ENCODE measurements at regions of chrX and their contacts with region 1.

Region 1: GRCh38 chrX:53317365-53318069 is 36.1 kb upstream of the IQSEC2 start:
- DNase-seq: peak; percentile 47 to 83 (median 65)
- ATAC-seq: peak; percentile 78
- H3K4me3 ChIP-seq: no peak overlapping the region
- H3K27ac ChIP-seq: no peak overlapping the region
- H3K4me1 ChIP-seq: peaks cover 0 to 20% of the 10 kb centered on the region in 2 donors
- H3K27me3 ChIP-seq: peaks cover 38 to 43% of the 10 kb centered on the region in 2 donors
- CTCF ChIP-seq: peak; percentile 77 to 83

Region 2: GRCh38 chrX:53071604-53072417 is 245.7 kb before region 1 on chrX:
- intact Hi-C with region 1: no loop called
- DNase-seq: peak in 2 of 4 donors; percentile 73 to 77
- ATAC-seq: peak; percentile 95
- H3K4me3 ChIP-seq: peak overlapping the region; percentile 17 to 31
- H3K27ac ChIP-seq: no peak overlapping the region
- H3K4me1 ChIP-seq: no peaks in the 10 kb centered on the region
- H3K27me3 ChIP-seq: peaks cover 0 to 4% of the 10 kb centered on the region in 2 donors
- CTCF ChIP-seq: peak; percentile 55 to 61

Region 3: GRCh38 chrX:53433651-53434639 is 116.4 kb after region 1 on chrX and contains the start of gene HSD17B10:
- intact Hi-C with region 1: loop called in 1 of 2 experiments (anchors 10 kb)
- DNase-seq: peak; percentile 66 to 96 (median 88)
- ATAC-seq: peak; percentile 98
- H3K4me3 ChIP-seq: peak within 1 kb of the TSS; percentile 45 to 56
- H3K27ac ChIP-seq: peak within 1 kb of the TSS; percentile 13 to 73
- H3K4me1 ChIP-seq: peaks cover 0 to 13% of the 10 kb centered on the region in 2 donors
- H3K27me3 ChIP-seq: peaks cover 0 to 17% of the 10 kb centered on the region in 2 donors
- CTCF ChIP-seq: no peak
- polyA plus RNA-seq, gene HSD17B10: 66.7 to 85.3 (median 77.4) TPM

Region 4: DNA sequence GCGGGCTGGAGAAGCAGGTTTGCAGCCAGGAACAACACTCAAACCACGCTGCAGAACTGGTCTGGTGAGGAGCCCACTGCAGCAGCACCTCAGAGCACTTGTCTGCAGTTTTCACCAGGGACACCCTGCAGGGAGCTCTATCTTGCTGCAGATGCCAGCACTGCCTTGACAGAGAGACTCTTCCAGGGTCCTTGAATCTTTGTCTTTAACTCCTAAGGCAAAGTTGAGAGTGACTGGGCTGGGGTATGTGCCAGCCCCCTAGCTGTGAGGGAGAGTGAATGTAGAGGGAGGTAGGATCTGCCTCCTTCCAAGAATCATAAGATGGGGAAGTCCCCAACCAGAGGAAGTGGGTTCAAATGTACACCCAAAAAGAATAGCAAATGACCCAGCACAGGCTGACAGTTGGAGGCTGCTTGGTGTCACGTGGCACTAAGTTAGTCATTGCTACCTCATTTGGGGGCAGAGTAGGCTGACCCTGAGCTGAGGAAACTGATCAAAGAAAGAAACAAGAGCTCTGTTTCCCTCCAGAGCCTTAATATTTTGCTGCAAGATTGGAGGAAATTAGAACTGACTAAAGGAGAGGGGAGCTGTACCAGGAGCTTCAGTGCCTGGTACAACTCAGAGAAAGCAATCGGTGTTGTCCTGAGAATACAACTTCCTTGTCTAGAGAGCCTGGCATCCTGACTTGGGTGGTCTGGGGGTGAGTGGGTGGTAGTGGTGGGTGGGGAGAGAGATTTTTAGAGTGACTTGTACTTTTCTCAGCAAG is 397.2 kb after region 1 on chrX:
- intact Hi-C with region 1: no loop called
- DNase-seq: peak in 3 of 4 donors; percentile 5 to 39 (median 35)
- ATAC-seq: peak; percentile 90
- H3K4me3 ChIP-seq: no peak overlapping the region
- H3K27ac ChIP-seq: no peak overlapping the region
- H3K4me1 ChIP-seq: no peaks in the 10 kb centered on the region
- H3K27me3 ChIP-seq: no peaks in the 10 kb centered on the region
- CTCF ChIP-seq: no peak

Measured in left lung (tissue), 14 donors.